ENCODE measurements at regions of chr19 and their contacts with region 1.

Region 1: DNA sequence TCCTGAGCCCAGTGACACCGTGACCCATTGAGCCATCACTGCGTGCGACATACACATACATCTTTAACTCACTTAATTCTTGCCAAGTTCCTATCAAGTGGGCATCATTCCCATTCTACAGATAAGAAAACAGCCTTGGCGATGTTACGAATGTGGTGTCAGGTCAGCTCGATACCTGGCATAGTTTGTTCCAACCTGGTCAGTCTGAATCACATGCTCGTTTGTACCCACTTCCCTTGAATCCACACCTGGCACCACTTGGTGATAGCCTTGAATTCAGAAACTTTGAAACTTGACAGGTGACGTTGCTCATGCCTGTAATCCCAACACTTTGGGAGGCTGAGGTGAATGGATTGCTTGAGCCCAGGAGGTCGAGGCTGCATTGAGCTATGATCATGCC is 59.1 kb downstream of the SLC7A9 start:
- DNase-seq: no peak
- H3K4me3 ChIP-seq: no peak overlapping the region
- H3K4me3 Mint-ChIP-seq: no peak overlapping the region
- H3K27ac ChIP-seq: no peak overlapping the region
- H3K27ac Mint-ChIP-seq: no peak overlapping the region
- H3K4me1 ChIP-seq: peaks cover 7% of the 10 kb centered on the region
- H3K4me1 Mint-ChIP-seq: peaks cover 17 to 34% (median 29%) of the 10 kb centered on the region in 3 donors
- H3K27me3 ChIP-seq: no peaks in the 10 kb centered on the region
- H3K27me3 Mint-ChIP-seq: peaks cover 0 to 4% of the 10 kb centered on the region in 2 donors

Region 2: DNA sequence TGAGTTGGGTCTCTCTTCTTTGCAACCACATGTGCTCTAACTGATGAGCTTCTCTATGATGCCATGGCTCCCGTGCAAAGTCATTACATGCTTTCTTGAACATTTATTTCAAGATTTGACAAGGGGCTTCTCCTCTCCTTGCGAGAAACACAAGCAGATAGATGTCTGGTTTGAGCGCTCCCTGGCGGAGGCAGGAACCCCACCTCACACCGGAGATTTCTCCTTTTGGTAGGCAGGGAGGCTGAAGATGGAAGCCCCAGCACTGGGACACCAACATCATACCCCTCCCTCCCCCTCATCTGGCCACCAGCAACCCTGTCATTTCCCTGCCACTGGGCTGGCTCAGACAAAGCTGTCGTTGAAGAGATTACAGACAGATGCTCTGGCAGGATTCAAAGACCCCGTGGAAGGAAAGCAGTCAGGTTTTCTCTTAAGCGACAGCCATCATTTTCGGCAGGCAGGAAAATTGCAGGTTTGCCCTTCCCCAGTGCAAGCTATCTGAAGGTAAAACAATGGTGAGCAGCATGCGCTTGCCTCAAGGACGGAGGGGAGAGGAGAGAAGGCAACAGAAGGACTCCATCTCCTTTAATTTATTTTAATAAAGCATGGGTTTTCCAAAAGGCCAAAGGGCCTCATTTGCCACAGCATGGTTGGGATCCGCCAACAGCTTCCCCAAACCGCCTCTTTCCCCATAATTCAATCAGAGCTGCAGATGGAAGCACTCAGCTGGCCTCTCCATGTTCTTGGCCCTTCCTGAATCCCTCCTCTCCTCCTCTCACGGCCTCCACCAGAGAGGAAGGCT is 1117.1 kb before region 1 on chr19:
- CTCF ChIA-PET with region 1: no interaction called
- POLR2A ChIA-PET with region 1: no interaction called
- DNase-seq: no peak
- H3K4me3 ChIP-seq: no peak overlapping the region
- H3K4me3 Mint-ChIP-seq: no peak overlapping the region
- H3K27ac ChIP-seq: no peak overlapping the region
- H3K27ac Mint-ChIP-seq: no peak overlapping the region
- H3K4me1 ChIP-seq: no peaks in the 10 kb centered on the region
- H3K4me1 Mint-ChIP-seq: no peaks in the 10 kb centered on the region
- H3K27me3 ChIP-seq: no peaks in the 10 kb centered on the region
- H3K27me3 Mint-ChIP-seq: peaks cover 5 to 7% of the 10 kb centered on the region in 2 donors

Region 3: GRCh38 chr19:32767951-32768679 is 42.3 kb before region 1 on chr19:
- CTCF ChIA-PET with region 1: no interaction called
- POLR2A ChIA-PET with region 1: interaction called, 10 read pairs
- DNase-seq: no peak
- H3K4me3 ChIP-seq: no peak overlapping the region
- H3K4me3 Mint-ChIP-seq: no peak overlapping the region
- H3K27ac ChIP-seq: no peak overlapping the region
- H3K27ac Mint-ChIP-seq: peak overlapping the region in 1 of 8 donors; percentile 51
- H3K4me1 ChIP-seq: no peaks in the 10 kb centered on the region
- H3K4me1 Mint-ChIP-seq: no peaks in the 10 kb centered on the region
- H3K27me3 ChIP-seq: no peaks in the 10 kb centered on the region
- H3K27me3 Mint-ChIP-seq: peaks cover 2 to 3% of the 10 kb centered on the region in 2 donors

Measured in CD8-positive, alpha-beta memory T cell (primary cell).